CD4-positive, alpha-beta memory T cell (primary cell): ENCODE measurements at regions of chr2 and their contacts with region 1.

Region 1: DNA sequence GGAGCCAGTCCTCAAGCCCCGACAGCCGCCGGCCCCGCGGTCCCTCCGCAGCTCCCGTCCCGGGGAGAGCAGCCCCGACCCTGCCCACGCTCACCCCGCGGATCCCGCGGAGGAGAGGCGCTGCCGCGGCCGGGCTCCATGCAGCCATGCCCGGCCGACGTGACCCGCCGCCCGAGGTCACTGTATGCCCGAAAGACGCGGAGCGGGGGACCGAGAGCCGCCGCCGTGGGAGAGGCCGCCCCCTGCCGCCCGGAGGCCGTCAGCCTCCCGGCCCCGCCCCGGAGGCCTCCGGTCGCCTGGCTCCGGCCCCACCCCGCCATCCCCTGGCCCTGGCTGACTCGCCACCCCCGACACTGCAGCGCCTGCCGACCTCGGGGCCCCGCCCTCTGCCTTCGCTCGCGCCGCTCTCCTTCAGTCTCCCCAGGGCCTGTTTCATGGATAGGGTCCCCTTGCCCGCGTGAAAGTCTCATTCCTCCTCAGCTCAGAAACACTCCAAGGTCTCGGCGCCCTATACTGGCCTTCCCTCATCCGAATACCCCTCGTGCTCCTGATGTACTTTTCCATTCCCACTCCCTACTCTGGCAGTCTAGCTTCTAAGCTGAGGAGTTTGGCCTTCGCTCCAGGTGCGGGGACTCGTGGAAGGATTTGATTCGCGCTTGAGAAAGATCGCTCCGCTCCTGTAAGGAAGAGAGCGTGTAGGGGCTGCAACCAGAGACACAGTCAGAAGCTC is at the start of gene BOLA3:
- DNase-seq: peak; percentile 72 to 79 (median 72)
- H3K4me3 ChIP-seq: peak within 1 kb of the TSS; percentile 58 to 63
- H3K4me3 Mint-ChIP-seq: no peak within 1 kb of the TSS
- H3K27ac ChIP-seq: peak within 1 kb of the TSS; percentile 59
- H3K27ac Mint-ChIP-seq: no peak within 1 kb of the TSS
- H3K4me1 ChIP-seq: peaks cover 18% of the 10 kb centered on the region
- H3K4me1 Mint-ChIP-seq: peaks cover 0 to 6% (median 4%) of the 10 kb centered on the region in 4 donors
- H3K27me3 ChIP-seq: no peaks in the 10 kb centered on the region
- H3K27me3 Mint-ChIP-seq: no peaks in the 10 kb centered on the region
- total RNA-seq, gene BOLA3: 16.4 to 19.0 TPM

Region 2: GRCh38 chr2:73408198-73408597 is 739.7 kb before region 1 on chr2:
- CTCF ChIA-PET with region 1: no interaction called
- POLR2A ChIA-PET with region 1: no interaction called
- intact Hi-C with region 1: no loop called
- DNase-seq: no peak
- H3K4me3 ChIP-seq: no peak overlapping the region
- H3K4me3 Mint-ChIP-seq: no peak overlapping the region
- H3K27ac ChIP-seq: no peak overlapping the region
- H3K27ac Mint-ChIP-seq: no peak overlapping the region
- H3K4me1 ChIP-seq: no peaks in the 10 kb centered on the region
- H3K4me1 Mint-ChIP-seq: peaks cover 7 to 9% (median 8%) of the 10 kb centered on the region in 4 donors
- H3K27me3 ChIP-seq: no peaks in the 10 kb centered on the region
- H3K27me3 Mint-ChIP-seq: no peaks in the 10 kb centered on the region

Region 3: GRCh38 chr2:73828818-73829570 is 318.9 kb before region 1 on chr2 and contains the start of gene STAMBP:
- CTCF ChIA-PET with region 1: interaction called, 114 read pairs
- POLR2A ChIA-PET with region 1: interaction called, 5 read pairs
- intact Hi-C with region 1: loop called (anchors 10 kb)
- DNase-seq: peak; percentile 87 to 95 (median 91)
- H3K4me3 ChIP-seq: peak within 1 kb of the TSS; percentile 64 to 81
- H3K4me3 Mint-ChIP-seq: peak within 1 kb of the TSS; percentile 91 to 99 (median 96)
- H3K27ac ChIP-seq: peak within 1 kb of the TSS; percentile 92
- H3K27ac Mint-ChIP-seq: peak within 1 kb of the TSS; percentile 94 to 100 (median 98)
- H3K4me1 ChIP-seq: peaks cover 45% of the 10 kb centered on the region
- H3K4me1 Mint-ChIP-seq: peaks cover 34 to 49% (median 40%) of the 10 kb centered on the region in 4 donors
- H3K27me3 ChIP-seq: no peaks in the 10 kb centered on the region
- H3K27me3 Mint-ChIP-seq: no peaks in the 10 kb centered on the region
- total RNA-seq, gene STAMBP: 34.8 to 37.3 TPM

Region 4: GRCh38 chr2:73907840-73908452 is 239.9 kb before region 1 on chr2:
- CTCF ChIA-PET with region 1: interaction called, 33 read pairs
- POLR2A ChIA-PET with region 1: no interaction called
- intact Hi-C with region 1: loop called (anchors 1 kb)
- DNase-seq: peak in 4 of 5 donors; percentile 52 to 54 (median 53)
- H3K4me3 ChIP-seq: no peak overlapping the region
- H3K4me3 Mint-ChIP-seq: no peak overlapping the region
- H3K27ac ChIP-seq: no peak overlapping the region
- H3K27ac Mint-ChIP-seq: peak overlapping the region in 2 of 7 donors; percentile 62 to 72
- H3K4me1 ChIP-seq: no peaks in the 10 kb centered on the region
- H3K4me1 Mint-ChIP-seq: peaks cover 0 to 2% (median 0%) of the 10 kb centered on the region in 4 donors
- H3K27me3 ChIP-seq: no peaks in the 10 kb centered on the region
- H3K27me3 Mint-ChIP-seq: no peaks in the 10 kb centered on the region

Region 5: DNA sequence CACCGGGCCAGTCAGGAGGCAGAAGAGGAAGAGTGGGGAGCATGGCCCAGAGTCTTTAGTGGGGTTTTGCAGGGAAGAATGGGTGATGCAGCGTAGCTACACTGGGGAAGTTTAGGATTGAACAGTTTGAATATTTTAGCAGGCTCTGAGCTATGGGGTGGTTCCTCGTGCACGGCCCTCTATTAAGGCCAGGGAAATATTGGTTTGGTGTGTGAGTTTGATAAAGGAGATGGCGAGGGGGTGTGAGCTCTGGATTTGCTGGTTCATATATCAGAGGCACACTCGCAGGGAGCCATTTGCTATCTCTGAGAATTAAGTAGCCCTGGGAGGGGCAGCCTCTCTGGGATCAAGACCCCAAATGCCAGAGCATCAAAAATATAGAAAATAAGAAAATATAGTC is 50.3 kb before region 1 on chr2:
- CTCF ChIA-PET with region 1: no interaction called
- POLR2A ChIA-PET with region 1: no interaction called
- intact Hi-C with region 1: no loop called
- DNase-seq: no peak
- H3K4me3 ChIP-seq: no peak overlapping the region
- H3K4me3 Mint-ChIP-seq: no peak overlapping the region
- H3K27ac ChIP-seq: no peak overlapping the region
- H3K27ac Mint-ChIP-seq: peak overlapping the region in 3 of 7 donors; percentile 21 to 62 (median 44)
- H3K4me1 ChIP-seq: no peaks in the 10 kb centered on the region
- H3K4me1 Mint-ChIP-seq: no peaks in the 10 kb centered on the region
- H3K27me3 ChIP-seq: no peaks in the 10 kb centered on the region
- H3K27me3 Mint-ChIP-seq: no peaks in the 10 kb centered on the region

Region 6: DNA sequence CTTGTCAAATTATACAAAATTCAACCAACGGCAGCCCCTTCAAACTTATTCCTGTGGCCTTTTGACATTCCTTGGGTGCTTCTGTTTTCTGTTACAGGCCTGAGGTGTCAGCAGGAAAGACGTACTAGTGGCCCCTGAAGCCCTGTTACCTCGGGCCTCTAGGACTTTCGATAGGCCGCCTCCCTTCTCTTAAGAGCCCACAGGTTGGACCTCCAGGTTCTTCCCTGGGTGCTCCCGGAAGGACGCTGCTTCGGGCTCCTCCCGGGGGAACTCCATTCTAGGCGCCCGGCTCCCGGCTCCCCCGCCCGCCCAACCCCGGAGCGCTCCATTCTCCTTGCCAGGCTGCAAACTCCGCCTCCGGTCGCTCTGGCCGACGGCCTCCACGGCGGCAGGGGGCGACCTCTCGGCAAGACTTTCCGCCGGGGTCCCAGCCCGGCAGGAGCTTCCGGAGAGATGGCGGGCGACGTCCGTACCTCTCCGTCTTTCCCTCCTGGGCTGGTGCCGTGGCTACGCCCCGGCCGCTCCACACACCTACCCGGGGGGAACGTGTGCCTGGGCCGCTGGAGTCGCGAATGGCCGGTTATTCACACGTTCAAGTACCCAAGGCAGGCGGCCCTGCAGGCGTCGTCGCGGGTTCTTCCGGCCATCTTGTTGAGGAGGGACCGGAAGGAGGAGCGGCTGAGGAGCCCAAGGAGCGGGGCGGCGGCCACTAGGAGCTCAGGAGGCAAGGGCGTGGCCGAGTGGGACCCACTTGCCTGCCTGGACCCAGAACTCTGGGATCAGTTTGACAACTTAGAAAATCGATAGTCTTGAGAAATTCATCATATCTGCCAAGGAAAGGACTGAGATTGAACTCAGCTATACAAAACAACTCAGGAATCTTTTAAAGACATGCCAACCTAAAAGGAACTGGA is 27.7 kb before region 1 on chr2:
- CTCF ChIA-PET with region 1: interaction called, 16 read pairs
- POLR2A ChIA-PET with region 1: interaction called, 23 read pairs
- intact Hi-C with region 1: loop called (anchors 1 kb)
- DNase-seq: peak; percentile 79 to 85 (median 80)
- H3K4me3 ChIP-seq: peak overlapping the region; percentile 33 to 94
- H3K4me3 Mint-ChIP-seq: peak overlapping the region; percentile 85 to 92 (median 88)
- H3K27ac ChIP-seq: peak overlapping the region; percentile 70
- H3K27ac Mint-ChIP-seq: peak overlapping the region; percentile 79 to 97 (median 92)
- H3K4me1 ChIP-seq: no peaks in the 10 kb centered on the region
- H3K4me1 Mint-ChIP-seq: peaks cover 4 to 11% (median 7%) of the 10 kb centered on the region in 4 donors
- H3K27me3 ChIP-seq: no peaks in the 10 kb centered on the region
- H3K27me3 Mint-ChIP-seq: peaks cover 0 to under 1% of the 10 kb centered on the region in 2 donors

Region 7: DNA sequence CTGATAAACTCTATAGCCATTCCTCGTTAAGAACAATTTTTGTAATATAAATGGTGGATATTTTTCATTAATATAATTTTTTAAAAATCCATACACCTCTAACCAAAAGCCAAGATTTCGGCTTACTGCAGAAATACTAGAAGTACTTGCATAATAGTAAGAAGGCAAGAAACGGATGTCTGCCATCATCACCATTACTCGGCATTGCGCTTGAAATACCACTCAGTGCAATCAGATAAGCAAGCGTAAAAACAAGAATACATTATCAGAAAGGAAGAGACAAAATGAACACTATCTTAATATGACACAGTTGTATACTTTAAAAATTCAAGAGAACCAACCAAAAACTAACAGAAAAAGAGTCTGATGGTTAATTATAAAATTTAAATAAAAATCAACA is 15.1 kb after region 1 on chr2:
- CTCF ChIA-PET with region 1: interaction called, 10 read pairs
- POLR2A ChIA-PET with region 1: interaction called, 6 read pairs
- intact Hi-C with region 1: no loop called
- DNase-seq: no peak
- H3K4me3 ChIP-seq: no peak overlapping the region
- H3K4me3 Mint-ChIP-seq: no peak overlapping the region
- H3K27ac ChIP-seq: no peak overlapping the region
- H3K27ac Mint-ChIP-seq: peak overlapping the region in 1 of 7 donors; percentile 57
- H3K4me1 ChIP-seq: no peaks in the 10 kb centered on the region
- H3K4me1 Mint-ChIP-seq: peaks cover 7 to 12% (median 8%) of the 10 kb centered on the region in 4 donors
- H3K27me3 ChIP-seq: no peaks in the 10 kb centered on the region
- H3K27me3 Mint-ChIP-seq: no peaks in the 10 kb centered on the region

Region 8: DNA sequence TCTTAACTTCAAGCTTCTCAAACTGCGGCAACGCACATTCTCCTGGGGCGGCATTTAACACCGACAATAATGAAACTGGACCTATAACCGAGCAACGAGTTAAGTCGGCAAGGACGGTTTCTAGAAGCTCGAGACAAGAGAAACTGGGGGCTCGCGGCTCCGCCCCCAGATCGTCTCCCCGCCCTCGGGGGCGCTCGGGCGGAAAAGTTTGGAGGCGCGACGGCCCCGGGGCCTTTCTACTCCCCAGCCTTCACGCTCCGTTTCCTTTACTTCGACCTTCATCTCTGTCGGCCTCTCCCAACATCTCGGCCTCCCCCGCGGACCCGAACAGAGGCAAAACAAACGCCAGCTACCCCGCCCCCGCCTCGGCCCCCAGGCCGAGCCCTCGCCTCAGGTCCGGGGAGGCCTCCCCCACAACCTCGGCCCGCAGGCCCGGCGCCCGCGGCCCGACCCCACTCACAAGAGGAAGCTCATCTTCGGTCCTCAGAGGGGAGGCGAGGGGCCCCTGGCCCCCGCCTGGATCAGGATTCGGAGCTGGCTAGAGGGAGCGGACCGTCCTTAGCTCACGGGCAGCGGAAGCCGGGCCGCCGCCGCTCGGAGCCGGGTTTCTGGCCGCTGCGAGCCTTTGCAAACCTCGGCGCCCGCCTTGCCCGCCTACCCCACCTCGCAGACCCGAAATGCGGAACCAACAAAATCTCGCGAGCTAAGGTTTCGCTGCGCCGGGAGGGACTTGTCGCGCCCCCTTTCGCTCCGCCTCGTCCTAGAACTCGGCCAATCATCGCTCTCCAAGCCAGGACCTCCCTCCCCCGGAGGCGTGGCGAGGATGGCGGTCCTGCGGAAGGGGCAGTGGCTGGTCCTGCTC is 30.5 kb after region 1 on chr2 and contains the start of gene MOB1A:
- CTCF ChIA-PET with region 1: interaction called, 17 read pairs
- POLR2A ChIA-PET with region 1: interaction called, 23 read pairs
- intact Hi-C with region 1: loop called (anchors 2 kb)
- DNase-seq: peak; percentile 97 to 99 (median 98)
- H3K4me3 ChIP-seq: peak within 1 kb of the TSS; percentile 69 to 74
- H3K4me3 Mint-ChIP-seq: peak within 1 kb of the TSS; percentile 90 to 94 (median 94)
- H3K27ac ChIP-seq: peak within 1 kb of the TSS; percentile 99
- H3K27ac Mint-ChIP-seq: peak within 1 kb of the TSS; percentile 89 to 96 (median 95)
- H3K4me1 ChIP-seq: peaks cover 47% of the 10 kb centered on the region
- H3K4me1 Mint-ChIP-seq: peaks cover 22 to 48% (median 35%) of the 10 kb centered on the region in 4 donors
- H3K27me3 ChIP-seq: no peaks in the 10 kb centered on the region
- H3K27me3 Mint-ChIP-seq: no peaks in the 10 kb centered on the region
- total RNA-seq, gene MOB1A: 135 TPM

Region 9: GRCh38 chr2:74198461-74199274 is 50.8 kb after region 1 on chr2 and contains the start of gene MTHFD2:
- CTCF ChIA-PET with region 1: interaction called, 4 read pairs
- POLR2A ChIA-PET with region 1: interaction called, 4 read pairs
- intact Hi-C with region 1: loop called (anchors 2 kb)
- DNase-seq: peak; percentile 84 to 89 (median 86)
- H3K4me3 ChIP-seq: peak within 1 kb of the TSS; percentile 85 to 91
- H3K4me3 Mint-ChIP-seq: peak within 1 kb of the TSS; percentile 94 to 100 (median 98)
- H3K27ac ChIP-seq: peak within 1 kb of the TSS; percentile 86
- H3K27ac Mint-ChIP-seq: peak within 1 kb of the TSS; percentile 89 to 100 (median 99)
- H3K4me1 ChIP-seq: peaks cover 35% of the 10 kb centered on the region
- H3K4me1 Mint-ChIP-seq: peaks cover 20 to 41% (median 31%) of the 10 kb centered on the region in 4 donors
- H3K27me3 ChIP-seq: no peaks in the 10 kb centered on the region
- H3K27me3 Mint-ChIP-seq: no peaks in the 10 kb centered on the region
- total RNA-seq, gene MTHFD2: 23.8 to 25.0 TPM

Region 10: DNA sequence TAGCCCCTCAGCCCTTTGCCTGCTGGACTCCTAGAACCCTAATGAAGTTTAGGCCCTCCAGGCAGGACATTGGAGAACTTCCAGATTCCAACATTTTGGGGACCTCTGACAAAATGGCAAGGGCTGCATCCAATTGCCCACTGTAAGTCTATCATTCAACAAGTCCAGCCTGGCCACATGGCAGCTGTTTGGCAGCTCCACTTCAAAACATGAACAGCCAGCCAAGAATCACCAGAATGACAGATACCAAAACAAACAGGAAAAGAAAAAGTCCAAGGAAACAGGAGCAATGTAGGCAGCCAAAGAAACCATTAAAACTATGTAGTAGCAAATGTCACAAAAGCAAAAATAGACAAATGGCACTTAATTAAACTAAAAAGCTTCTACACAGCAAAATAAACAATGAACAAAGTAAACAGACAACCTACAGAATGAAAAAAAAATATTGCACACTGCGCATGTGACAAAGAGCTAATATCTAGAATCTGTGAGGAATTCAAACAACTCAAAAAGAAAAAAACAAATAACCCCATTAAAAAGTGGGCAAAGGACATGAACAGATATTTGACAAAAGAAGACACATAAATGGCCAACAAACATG is 169.9 kb after region 1 on chr2:
- CTCF ChIA-PET with region 1: no interaction called
- POLR2A ChIA-PET with region 1: no interaction called
- intact Hi-C with region 1: no loop called
- DNase-seq: no peak
- H3K4me3 ChIP-seq: no peak overlapping the region
- H3K4me3 Mint-ChIP-seq: no peak overlapping the region
- H3K27ac ChIP-seq: no peak overlapping the region
- H3K27ac Mint-ChIP-seq: no peak overlapping the region
- H3K4me1 ChIP-seq: no peaks in the 10 kb centered on the region
- H3K4me1 Mint-ChIP-seq: no peaks in the 10 kb centered on the region
- H3K27me3 ChIP-seq: no peaks in the 10 kb centered on the region
- H3K27me3 Mint-ChIP-seq: no peaks in the 10 kb centered on the region